PC-3 (cell line): ENCODE measurements at regions of chr20 and their contacts with region 1.

Region 1: DNA sequence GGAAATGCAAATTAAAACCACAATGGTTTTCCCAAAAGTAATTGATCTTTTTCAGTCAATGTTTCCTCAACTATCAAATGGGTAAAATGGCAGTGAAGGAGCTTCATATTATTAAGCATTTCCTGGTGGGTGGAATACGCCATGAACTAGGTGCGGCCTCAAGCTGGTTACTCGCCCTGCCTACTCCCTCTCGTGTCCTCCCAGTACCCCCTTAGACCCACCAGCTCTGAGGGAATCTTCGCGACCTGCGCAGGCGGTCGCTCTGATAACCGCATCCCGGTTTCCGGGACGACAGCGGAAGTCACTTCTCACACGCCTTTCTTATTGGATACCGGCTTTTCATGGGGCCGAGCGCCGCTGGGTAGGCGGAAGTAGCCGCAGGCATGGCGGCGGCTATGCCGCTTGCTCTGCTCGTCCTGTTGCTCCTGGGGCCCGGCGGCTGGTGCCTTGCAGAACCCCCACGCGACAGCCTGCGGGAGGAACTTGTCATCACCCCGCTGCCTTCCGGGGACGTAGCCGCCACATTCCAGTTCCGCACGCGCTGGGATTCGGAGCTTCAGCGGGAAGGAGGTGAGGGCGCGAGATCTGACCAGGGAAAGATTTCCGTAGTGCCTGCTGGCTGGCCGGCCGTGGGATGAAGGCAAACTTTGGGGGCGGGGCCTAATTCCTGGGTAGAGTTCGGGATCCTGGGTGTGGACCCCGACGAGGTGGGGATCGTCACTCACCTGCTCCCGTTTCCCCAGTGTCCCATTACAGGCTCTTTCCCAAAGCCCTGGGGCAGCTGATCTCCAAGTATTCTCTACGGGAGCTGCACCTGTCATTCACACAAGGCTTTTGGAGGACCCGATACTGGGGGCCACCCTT is at the start of gene PIGT:
- DNase-seq: peak; percentile 90
- ATAC-seq: peak; percentile 56
- H3K4me3 ChIP-seq: peak within 1 kb of the TSS; percentile 85
- H3K27ac ChIP-seq: peak within 1 kb of the TSS; percentile 59
- H3K4me1 ChIP-seq: peaks cover 47% of the 10 kb centered on the region
- H3K27me3 ChIP-seq: no peaks in the 10 kb centered on the region
- CTCF ChIP-seq: no peak
- total RNA-seq, gene PIGT: 101 and 129 TPM in 2 replicates

Region 2: DNA sequence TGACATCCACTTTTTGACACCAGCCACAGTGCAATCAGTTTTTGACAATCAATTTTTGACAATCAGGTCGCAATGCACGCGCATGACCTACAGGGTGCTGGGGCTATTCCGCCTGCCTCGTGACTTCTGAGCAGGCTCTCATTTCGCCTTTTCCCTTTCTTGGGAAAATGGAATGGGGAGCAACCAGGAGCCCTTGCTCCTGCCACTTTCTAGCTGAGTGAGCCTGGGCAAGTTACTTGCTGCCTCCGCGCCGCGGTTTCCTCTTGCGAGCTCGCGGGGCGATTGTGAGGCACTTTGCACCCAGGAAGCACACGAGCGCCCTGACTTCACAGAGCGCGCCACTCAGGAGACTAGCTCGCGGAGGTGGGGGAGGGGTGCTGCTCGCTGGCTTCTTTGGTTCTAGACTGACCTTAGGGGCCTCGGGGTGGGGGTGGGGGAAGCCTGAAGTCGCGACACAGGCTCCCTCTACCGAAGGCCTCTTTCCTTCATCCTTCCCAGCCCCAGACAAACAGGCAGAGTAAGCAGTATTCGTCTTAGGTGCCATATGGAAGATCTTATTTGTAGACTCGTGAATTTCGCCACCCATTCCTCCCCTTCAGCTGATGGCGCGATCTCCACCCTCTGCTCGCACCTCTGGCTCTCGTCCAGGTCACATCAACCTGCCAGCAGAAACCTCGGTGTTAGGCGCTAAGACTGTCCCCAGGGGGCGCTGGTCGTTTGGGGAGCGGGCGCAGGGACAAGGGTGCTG is 42.5 kb before region 1 on chr20:
- CTCF ChIA-PET with region 1: interaction called, 14 read pairs
- POLR2A ChIA-PET with region 1: interaction called, 6 read pairs
- intact Hi-C with region 1: no loop called
- DNase-seq: peak; percentile 93
- ATAC-seq: peak; percentile 94
- H3K4me3 ChIP-seq: peak overlapping the region; percentile 23; the same call in 1 of the 2 replicates
- H3K27ac ChIP-seq: no peak overlapping the region
- H3K4me1 ChIP-seq: no peaks in the 10 kb centered on the region; the same call in 1 of the 2 replicates
- H3K27me3 ChIP-seq: no peaks in the 10 kb centered on the region
- CTCF ChIP-seq: peak; percentile 97

Region 3: DNA sequence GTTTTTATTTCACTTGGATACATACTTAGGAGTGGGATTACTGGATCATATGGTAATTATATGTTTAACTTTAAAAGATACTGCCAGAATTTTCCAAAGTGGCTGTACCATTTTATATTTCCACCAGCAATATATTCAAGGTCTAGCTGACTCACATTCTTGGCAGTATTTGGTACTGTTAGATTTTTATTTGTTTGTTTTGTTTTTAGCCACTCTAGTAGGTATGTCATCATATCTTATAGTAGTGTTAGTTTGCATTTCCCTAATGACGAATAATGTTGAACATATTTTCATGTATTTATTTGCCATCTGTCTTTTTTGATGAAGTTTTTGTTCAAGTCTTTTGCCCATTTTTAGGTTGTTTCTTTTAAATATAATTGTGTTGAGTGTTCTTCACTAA is 32.9 kb before region 1 on chr20:
- CTCF ChIA-PET with region 1: interaction called, 3 read pairs
- POLR2A ChIA-PET with region 1: no interaction called
- intact Hi-C with region 1: loop called (anchors 1 kb)
- DNase-seq: peak; percentile 89
- ATAC-seq: peak; percentile 97
- H3K4me3 ChIP-seq: no peak overlapping the region
- H3K27ac ChIP-seq: peak overlapping the region; percentile 69
- H3K4me1 ChIP-seq: peaks cover 23% of the 10 kb centered on the region
- H3K27me3 ChIP-seq: no peaks in the 10 kb centered on the region
- CTCF ChIP-seq: no peak

Region 4: DNA sequence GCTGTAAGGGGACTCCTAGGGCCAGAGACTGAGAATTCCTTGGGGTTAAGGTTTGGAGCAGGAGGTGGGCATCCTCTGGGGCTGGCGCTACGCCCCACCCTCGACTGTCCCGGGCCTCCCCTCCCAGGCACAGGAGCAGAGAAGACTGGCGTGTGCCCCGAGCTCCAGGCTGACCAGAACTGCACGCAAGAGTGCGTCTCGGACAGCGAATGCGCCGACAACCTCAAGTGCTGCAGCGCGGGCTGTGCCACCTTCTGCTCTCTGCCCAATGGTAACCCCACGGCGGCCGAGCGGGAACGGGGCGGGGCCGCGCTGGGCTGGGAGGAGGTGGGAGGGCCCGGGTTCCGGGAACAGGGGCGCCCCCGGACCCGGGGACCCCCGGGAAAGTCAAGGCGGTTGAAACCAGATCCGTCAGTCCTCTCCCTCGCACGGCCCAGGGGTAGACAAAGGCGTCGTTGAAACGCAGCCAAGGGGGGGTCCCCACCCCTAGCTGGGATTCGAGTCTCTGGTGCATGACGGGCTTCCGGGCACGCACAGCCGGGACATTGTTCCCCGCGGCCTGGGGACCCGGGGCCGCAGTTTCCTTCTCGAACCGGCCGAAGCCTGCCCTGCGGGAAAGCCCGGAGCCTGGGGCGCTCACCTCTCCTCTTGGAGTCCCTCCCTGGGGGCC is 54.4 kb after region 1 on chr20:
- CTCF ChIA-PET with region 1: no interaction called
- POLR2A ChIA-PET with region 1: no interaction called
- intact Hi-C with region 1: no loop called
- DNase-seq: no peak
- ATAC-seq: no peak
- H3K4me3 ChIP-seq: no peak overlapping the region
- H3K27ac ChIP-seq: no peak overlapping the region
- H3K4me1 ChIP-seq: no peaks in the 10 kb centered on the region
- H3K27me3 ChIP-seq: peaks cover 12% of the 10 kb centered on the region
- CTCF ChIP-seq: no peak